Colonic mucosa (tissue), 4 donors: ENCODE measurements at regions of chr12 and their contacts with region 1.

Region 1: DNA sequence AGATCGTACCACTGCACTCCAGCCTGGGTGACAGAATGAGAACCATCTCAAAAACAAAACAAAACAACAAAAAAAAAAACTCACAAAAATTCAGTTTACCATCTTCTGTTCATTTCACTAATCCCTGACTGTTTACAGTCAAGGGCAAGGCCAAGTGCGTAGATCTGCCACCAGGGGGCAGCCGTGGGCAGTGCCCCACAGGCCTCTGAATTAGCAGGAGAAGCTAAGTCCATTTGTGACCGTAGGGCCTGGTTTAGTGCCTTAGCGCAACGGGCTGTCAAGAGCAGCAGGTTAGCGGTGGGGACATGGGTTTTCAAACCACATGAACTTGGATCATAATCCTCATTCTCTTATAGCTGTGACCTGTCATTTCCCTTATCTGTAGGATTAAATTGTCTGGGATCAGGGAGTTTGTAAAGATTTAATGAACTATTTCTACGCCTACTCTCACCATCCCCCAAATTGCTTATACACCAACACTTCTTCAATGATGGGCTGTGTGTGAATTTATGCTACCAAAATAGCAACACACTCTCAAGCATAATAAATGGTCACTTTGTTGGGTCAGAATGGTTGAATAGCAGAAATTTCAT is 49.0 kb downstream of the KCTD10 start:
- DNase-seq: peak; percentile 83
- H3K4me3 ChIP-seq: no peak overlapping the region
- H3K27ac ChIP-seq: no peak overlapping the region
- H3K4me1 ChIP-seq: no peaks in the 10 kb centered on the region
- H3K27me3 ChIP-seq: no peaks in the 10 kb centered on the region
- CTCF ChIP-seq: peak; percentile 99

Region 2: GRCh38 chr12:109477185-109477962 is 49.2 kb after region 1 on chr12 and contains the starts of genes KCTD10 and UBE3B:
- intact Hi-C with region 1: loop called (anchors 5 kb)
- DNase-seq: peak; percentile 91
- H3K4me3 ChIP-seq: peak within 1 kb of the TSS; percentile 93
- H3K27ac ChIP-seq: peak within 1 kb of the TSS; percentile 93
- H3K4me1 ChIP-seq: peaks cover 5% of the 10 kb centered on the region
- H3K27me3 ChIP-seq: no peaks in the 10 kb centered on the region
- CTCF ChIP-seq: no peak
- total RNA-seq, gene KCTD10: 50.3 to 74.8 TPM
- total RNA-seq, gene UBE3B: 44.6 to 52.0 TPM